Heart right ventricle (tissue), 16 donors: ENCODE measurements at regions of chr15 and their contacts with region 1.

Region 1: DNA sequence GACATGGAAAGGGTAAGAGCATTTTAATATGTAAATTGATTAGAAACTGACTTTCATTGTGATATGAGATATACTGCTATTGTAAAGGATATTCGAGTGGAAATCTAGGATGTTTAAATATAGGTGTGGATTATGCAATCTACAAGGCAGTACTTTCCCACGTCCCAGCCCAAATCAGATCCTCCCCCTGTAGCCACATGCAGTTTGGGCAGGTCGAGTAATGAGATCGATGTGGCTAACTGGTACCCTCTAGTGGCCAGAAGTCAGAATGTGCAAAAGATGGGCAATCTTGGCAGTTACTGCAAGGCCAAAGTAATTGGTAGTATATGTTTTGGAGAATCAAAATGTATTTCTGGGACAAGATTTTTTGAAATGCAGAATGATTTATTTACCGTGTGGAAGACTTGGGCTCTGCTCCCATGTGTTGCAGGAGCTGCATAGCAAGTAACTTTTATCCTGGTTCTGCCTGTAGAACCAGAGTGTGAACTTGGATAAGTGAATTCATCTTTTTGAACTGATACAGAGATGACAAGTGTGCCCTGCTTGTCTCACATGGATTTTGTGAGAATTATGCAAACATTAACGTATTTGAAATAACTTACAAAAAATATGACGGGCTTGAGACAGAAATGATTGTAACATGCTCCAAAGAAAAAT is 94.5 kb upstream of the ADAMTSL3 start:
- DNase-seq: peak in 1 of 2 donors; percentile 41
- ATAC-seq: peak in 5 of 8 donors; percentile 44 to 67 (median 55)
- H3K4me3 ChIP-seq: no peak overlapping the region
- H3K27ac ChIP-seq: no peak overlapping the region
- H3K4me1 ChIP-seq: no peaks in the 10 kb centered on the region
- H3K27me3 ChIP-seq: peaks cover 0 to 11% (median 5%) of the 10 kb centered on the region in 7 donors
- CTCF ChIP-seq: peak; percentile 63 to 84 (median 81)

Region 2: DNA sequence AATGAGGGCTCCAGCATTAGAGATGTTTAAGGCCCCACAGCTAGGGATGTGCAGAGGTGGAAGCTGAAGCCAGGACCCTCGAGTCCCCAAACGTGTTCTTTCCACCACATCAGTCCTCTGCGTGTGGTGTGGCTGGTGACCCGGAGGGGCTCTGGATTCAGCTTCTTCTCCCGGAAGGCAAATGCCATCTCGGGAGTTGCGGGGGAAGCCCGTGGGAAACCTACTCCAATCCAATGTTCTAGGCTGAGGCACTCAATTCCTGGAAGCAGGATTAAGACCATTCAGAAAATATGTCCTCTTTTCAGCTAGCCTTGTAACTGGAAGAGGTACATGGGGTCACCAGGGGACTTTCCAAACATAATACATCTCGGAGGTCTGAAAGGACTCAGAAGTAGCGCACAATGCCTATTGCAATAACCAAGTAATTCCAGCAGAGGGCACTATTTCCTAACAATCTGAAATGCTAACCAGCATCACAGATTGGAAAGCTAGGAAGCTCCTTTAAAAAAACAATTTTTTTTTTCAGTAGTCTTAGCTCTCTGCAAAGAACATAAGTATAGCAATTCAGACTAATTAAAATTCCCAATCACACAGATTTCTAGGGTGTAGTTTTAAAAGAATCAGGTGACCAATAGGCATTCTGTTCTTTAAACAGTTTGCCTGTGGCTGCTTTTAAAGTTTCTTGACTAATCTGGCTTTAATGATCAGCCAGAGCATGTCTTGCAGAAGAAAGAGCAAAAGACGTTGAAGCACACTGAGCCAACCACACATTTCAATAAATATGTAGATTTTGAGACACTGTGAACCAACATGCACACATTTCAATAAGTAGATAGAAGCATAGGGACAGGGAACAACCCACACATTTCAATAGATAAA is 311.0 kb before region 1 on chr15:
- intact Hi-C with region 1: loop called (anchors 2 to 10 kb)
- DNase-seq: peak in 1 of 2 donors; percentile 37
- ATAC-seq: peak in 5 of 8 donors; percentile 46 to 62 (median 58)
- H3K4me3 ChIP-seq: no peak overlapping the region
- H3K27ac ChIP-seq: no peak overlapping the region
- H3K4me1 ChIP-seq: no peaks in the 10 kb centered on the region
- H3K27me3 ChIP-seq: peaks cover 0 to 61% (median 40%) of the 10 kb centered on the region in 7 donors
- CTCF ChIP-seq: peak; percentile 83 to 96 (median 94)

Region 3: DNA sequence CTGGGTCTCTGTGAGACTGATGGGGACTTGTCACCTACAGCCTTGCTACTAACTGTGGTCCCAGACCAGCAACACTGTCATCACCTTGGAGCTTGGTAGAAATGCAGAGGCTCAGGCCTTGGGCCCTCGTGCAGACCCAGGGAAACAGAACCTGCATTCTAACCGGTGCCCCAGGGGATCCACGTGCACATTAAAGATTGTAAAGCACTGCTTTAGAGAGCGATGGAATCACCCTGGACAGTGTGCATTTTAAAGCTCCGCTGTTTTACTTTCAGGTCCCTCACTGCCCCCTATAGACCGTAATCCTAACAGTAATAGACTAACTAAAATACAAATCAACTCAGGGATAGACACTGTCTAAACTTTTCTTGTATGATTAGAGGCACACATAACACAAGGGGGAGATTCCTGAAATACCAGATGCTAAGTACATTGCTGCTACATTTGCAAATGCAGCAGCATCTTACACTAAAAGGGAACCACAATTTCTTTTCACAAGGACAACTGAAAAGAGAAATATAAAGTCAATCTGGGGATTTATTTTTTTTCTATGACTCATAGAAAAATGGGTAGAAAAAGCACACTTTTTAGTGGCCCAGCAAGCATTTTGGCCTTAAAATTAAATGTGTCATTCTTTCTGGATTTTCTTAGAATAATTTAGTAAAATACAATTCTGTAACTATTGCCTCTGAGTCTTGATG is 122.8 kb before region 1 on chr15:
- intact Hi-C with region 1: loop called (anchors 1 to 5 kb)
- DNase-seq: no peak
- ATAC-seq: peak in 3 of 8 donors; percentile 57 to 74 (median 62)
- H3K4me3 ChIP-seq: no peak overlapping the region
- H3K27ac ChIP-seq: no peak overlapping the region
- H3K4me1 ChIP-seq: no peaks in the 10 kb centered on the region
- H3K27me3 ChIP-seq: peaks cover 0 to 43% (median 21%) of the 10 kb centered on the region in 7 donors
- CTCF ChIP-seq: peak in 7 of 9 donors; percentile 39 to 53 (median 48)

Region 4: GRCh38 chr15:83605111-83605945 is 45.9 kb after region 1 on chr15:
- intact Hi-C with region 1: no loop called
- DNase-seq: peak; percentile 7 to 25
- ATAC-seq: peak in 3 of 8 donors; percentile 58 to 75 (median 60)
- H3K4me3 ChIP-seq: no peak overlapping the region
- H3K27ac ChIP-seq: no peak overlapping the region
- H3K4me1 ChIP-seq: peaks cover 0 to 5% (median 0%) of the 10 kb centered on the region in 9 donors
- H3K27me3 ChIP-seq: peaks cover 0 to 13% (median 0%) of the 10 kb centered on the region in 7 donors
- CTCF ChIP-seq: no peak

Region 5: GRCh38 chr15:83848315-83849050 is 289.0 kb after region 1 on chr15:
- intact Hi-C with region 1: loop called in 1 of 10 experiments (anchors 10 kb)
- DNase-seq: no peak
- ATAC-seq: peak in 7 of 8 donors; percentile 44 to 70 (median 60)
- H3K4me3 ChIP-seq: no peak overlapping the region
- H3K27ac ChIP-seq: peak overlapping the region in 9 of 10 donors; percentile 6 to 77 (median 57)
- H3K4me1 ChIP-seq: peaks cover 0 to 59% (median 32%) of the 10 kb centered on the region in 9 donors
- H3K27me3 ChIP-seq: no peaks in the 10 kb centered on the region
- CTCF ChIP-seq: no peak